AG04449 (cell line): ENCODE measurements at regions of chr2 and their contacts with region 1.

Region 1: DNA sequence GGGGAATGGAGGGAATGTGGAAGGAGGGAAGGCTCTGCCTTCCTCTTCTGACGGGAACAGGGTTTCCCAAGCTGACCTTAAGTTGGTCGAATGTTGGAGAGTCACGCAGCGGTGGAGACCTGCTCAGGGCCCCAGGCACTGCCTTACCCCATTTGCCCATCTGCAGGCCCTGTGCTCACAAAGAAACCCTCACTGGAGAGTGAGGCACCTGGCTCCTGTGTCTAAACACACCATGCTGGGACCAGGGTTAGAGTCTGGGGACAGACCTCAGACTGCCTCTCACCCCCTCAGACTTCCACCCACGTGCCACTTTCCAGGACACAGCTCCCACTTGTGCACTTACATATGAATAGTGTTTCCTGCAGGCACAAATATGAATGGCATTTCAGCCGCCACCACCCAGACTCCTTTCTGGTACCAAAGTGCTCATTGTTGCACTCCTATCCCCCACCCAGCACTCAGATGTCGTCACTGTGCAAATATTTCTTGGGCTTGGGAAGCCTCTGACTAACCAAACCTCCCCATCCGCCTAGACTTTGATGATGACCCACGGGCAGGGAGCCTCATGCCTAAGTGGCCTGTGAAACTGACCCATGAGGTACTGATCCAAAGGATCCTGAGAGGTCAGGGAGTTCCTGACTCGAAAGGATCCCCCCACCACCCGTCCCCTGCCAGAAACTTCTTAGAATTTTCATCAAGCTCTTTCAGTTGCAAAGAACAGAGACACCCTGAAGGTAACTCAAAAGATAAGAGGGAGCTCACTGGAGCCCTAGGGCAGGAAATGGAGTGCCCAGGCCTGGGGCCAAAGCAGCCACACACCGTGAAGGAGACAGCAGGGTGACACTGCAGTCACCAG is 78.3 kb downstream of the STPG4 start:
- DNase-seq: peak; percentile 92
- H3K4me3 ChIP-seq: no peak overlapping the region
- CTCF ChIP-seq: no peak

Region 2: GRCh38 chr2:47065771-47066380 is 10.9 kb before region 1 on chr2:
- CTCF ChIA-PET with region 1: interaction called, 11 read pairs
- POLR2A ChIA-PET with region 1: interaction called, 20 read pairs
- DNase-seq: peak; percentile 98
- H3K4me3 ChIP-seq: no peak overlapping the region
- CTCF ChIP-seq: no peak

Region 3: GRCh38 chr2:47088668-47089462 is 12.1 kb after region 1 on chr2:
- CTCF ChIA-PET with region 1: interaction called, 19 read pairs
- POLR2A ChIA-PET with region 1: interaction called, 5 read pairs
- DNase-seq: no peak
- H3K4me3 ChIP-seq: no peak overlapping the region
- CTCF ChIP-seq: no peak